KBM-7 (cell line): ENCODE measurements at regions of chr12 and their contacts with region 1.

Region 1: GRCh38 chr12:26113853-26114719 is 10.8 kb downstream of the BHLHE41 start:
- DNase-seq: peak; percentile 91

Region 2: DNA sequence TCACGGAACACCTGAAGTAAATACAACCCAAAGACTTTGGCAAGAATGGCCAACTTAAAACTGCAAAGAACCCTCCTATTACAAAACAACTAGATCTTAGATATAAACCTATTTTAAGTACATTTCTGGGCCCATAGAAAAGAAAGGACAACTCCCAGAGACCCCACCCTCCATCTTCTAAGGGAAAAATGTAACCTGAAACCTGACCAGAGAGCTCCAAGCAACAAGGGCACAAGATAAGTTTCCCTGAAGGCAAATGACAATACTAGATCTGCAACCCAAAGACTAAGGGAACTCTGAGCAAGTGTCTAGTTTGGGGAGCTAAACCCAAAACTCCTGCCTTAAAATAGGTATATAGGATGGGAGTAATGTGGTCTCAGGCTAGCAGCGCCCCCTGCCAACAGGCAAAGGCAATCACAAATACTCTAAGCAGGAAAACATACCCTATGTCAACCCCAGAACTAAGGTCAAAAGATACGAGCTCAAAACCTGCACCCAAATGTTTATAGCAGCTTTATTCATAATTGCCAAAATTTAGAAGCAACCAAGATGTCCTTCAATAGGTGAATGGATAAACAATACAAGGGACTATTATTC is 500.0 kb after region 1 on chr12:
- in situ Hi-C with region 1: loop called (anchors 25 kb)
- DNase-seq: peak; percentile 51

Region 3: DNA sequence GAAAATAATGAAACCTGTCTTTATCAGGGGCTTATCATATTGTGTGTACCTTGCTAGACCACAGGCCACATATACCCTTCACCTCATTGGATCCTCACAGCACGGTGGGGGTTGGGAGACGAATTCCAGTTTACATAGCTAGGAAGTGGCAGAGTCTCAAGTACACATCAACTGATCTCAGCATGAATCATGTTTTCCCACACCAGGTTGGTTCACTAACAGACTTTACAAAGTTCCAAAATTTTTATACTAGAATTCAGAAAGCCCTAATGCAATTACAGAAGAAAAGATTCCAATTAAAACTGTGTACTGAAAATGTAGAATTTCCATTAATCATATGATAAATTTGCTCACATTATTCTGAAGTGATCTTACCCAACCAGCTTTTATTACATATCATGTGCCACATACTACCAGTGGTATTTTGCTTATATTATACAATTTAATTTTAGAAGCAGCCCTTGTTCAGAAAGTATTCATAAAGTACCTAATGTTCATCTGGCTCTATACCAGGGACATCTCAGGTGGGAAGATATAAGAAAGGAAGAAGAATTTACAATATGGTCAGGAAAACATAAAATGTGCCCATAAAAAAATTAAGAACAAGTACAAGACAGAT is 522.7 kb after region 1 on chr12:
- in situ Hi-C with region 1: no loop called
- DNase-seq: no peak